ENCODE measurements at regions of chr2 and their contacts with region 1.

Region 1: DNA sequence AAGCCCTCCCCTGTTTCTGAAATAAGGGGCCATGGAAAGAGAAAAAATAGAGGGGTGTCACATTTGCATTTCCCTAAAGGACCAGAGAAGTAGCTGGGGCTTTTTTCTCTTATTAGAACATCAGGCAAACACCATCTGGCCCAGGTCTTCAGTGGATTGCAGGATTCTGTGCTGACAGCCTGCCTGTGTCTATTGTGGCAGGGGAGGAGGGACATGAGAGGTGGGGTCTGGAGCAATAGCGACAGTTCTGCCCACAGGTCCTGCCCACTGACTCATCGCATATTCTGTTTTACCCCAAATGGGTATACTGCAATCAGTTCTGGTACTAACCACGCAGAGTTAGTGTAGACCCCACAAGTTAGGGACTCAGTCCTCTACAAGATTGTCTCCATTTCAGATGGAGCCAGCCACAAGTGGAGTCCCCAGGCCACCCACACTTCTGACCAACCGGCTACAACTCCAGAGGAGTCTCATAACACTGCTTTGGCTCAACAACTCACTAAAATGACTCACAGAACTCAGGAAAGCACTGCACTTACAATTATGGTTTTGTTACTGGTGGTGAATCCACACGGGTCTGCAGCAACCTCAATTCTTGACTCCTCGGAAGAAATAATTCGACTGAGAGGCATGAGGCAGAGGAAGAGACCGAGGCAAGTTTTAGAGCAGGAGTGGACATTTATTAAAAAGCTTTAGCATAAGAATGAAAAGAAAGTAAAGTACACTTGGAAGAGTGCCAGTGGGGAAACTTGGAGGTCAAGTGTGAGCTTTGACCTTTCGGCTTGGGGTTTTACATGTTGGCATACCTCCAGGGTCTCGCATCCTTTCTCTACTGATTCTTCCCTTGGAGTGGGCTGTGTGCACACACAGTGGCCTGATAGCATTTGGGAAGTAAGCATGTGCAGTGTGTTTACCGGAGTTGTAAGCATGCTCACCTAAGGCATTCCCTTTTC is 146.4 kb upstream of the SPATS2L start:
- DNase-seq: no peak
- H3K27ac ChIP-seq: no peak overlapping the region
- CTCF ChIP-seq: no peak

Region 2: DNA sequence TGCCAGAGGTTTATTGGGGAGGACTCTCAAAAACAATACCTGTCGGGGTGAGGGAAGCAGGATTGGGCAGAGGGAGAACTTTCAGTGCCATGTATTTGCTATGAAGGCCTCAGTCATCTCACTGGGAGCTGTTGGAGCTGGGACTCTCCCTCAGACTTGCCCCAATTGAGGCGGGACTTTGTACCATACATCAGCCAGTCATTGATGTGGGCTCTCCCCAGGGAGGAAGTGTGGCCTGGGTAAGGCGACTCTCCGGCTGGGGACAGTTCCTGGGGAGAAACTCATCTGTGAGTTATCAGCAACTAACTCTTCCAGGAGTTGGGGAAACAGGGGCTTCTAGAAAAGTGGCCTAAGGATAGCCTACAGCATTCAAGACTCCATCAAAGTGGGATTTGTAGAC is 375.6 kb before region 1 on chr2:
- CTCF ChIA-PET with region 1: no interaction called
- POLR2A ChIA-PET with region 1: interaction called, 17 read pairs
- DNase-seq: no peak
- H3K27ac ChIP-seq: no peak overlapping the region
- CTCF ChIP-seq: no peak